ENCODE measurements at regions of chr1 and their contacts with region 1.

Region 1: GRCh38 chr1:204791453-204792353 is 79.0 kb upstream of the NFASC start:
- DNase-seq: peak; percentile 75 to 79
- ATAC-seq: peak; percentile 91 to 97
- H3K4me3 ChIP-seq: no peak overlapping the region
- H3K27ac ChIP-seq: no peak overlapping the region
- H3K4me1 ChIP-seq: no peaks in the 10 kb centered on the region
- CTCF ChIP-seq: peak; percentile 84
- EP300 ChIP-seq: no peak
- POLR2A ChIP-seq: no peak
- RAD21 ChIP-seq: peak; percentile 24 to 33; a peak in 2 of 5 replicates

Region 2: DNA sequence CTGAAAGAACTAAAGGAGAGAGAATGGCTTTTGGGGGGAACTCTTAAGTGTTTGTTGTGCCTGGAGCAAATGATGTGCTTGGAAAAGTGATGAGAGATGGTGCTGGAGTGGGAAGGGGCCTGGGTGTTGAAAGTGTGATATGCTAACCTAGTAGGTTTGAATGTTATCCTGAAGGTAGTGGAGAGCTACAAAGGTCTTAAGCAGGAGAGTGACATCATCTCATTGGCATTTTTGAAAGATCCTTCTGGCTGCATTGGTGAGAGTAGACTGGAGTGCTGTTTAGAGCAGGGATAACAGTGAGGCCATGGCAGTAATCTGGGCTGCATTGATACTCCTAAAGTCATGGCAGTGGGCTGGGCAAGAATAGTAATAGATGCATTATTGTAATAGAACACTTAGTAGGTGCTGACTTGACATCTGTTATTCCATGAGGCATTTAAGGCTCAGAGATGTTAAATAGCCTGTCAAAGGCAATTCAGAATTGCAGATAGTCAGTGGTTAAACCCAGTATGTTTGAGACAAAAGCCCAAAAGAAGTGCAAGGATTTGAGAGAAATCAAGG is 231.0 kb before region 1 on chr1:
- CTCF ChIA-PET with region 1: interaction called, 39 read pairs
- POLR2A ChIA-PET with region 1: no interaction called
- DNase-seq: peak in 1 of 2 experiments; percentile 18
- ATAC-seq: peak in 1 of 2 experiments; percentile 31; a peak in 3 of 6 replicates
- H3K4me3 ChIP-seq: no peak overlapping the region
- H3K27ac ChIP-seq: no peak overlapping the region
- H3K4me1 ChIP-seq: peaks cover 4% of the 10 kb centered on the region; the same call in 2 of the 3 replicates
- CTCF ChIP-seq: no peak
- EP300 ChIP-seq: no peak
- POLR2A ChIP-seq: no peak
- RAD21 ChIP-seq: no peak

Region 3: DNA sequence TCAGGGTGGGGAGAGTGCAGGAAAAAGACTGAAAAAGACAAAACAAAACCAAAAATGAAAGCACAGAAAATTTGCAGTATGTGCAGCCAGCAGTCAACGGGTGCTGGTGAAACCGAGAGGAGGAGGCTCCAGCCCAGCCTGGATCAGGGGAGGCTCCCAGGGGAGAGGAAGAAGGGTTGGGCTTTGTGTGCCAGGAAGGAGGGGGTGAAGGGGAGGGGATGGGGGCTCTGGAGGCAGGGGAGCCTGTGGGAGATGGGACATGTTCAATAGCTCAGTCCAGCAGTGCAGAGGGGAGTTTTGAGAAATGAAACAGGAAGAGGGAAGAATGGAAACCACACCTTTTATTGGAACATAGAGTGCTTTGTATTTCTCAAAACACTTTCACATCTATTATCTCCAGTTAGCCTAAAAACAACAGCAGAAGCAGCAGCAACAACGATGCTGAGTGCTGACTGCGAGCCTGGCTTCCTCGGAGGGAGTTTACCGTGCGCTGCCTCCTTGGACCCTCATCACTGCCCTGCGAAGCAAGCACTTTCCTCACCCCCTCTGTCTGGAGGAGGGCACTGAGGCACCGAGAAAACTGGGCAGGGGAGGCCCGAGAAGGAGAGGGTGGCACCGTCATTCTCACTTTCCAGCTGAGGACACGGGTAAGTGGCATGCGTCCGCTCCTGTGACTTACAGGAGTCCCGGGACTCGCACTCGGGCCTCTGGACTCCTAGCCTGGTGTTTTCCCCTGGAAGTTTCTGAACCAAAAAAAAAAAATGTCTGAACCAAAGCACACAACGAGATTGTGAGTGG is 212.6 kb before region 1 on chr1:
- CTCF ChIA-PET with region 1: interaction called, 11 read pairs
- POLR2A ChIA-PET with region 1: interaction called, 5 read pairs
- DNase-seq: no peak
- ATAC-seq: no peak
- H3K4me3 ChIP-seq: no peak overlapping the region
- H3K27ac ChIP-seq: 0 out of 6 replicates have a peak overlapping the region, but pooled peaks of 1 of the 2 experiments have one; percentile 30
- H3K4me1 ChIP-seq: peaks cover 6% of the 10 kb centered on the region
- CTCF ChIP-seq: no peak
- EP300 ChIP-seq: no peak
- POLR2A ChIP-seq: no peak
- RAD21 ChIP-seq: no peak

Region 4: GRCh38 chr1:204615881-204616280 is 175.8 kb before region 1 on chr1:
- CTCF ChIA-PET with region 1: interaction called, 10 read pairs
- POLR2A ChIA-PET with region 1: no interaction called
- DNase-seq: no peak
- ATAC-seq: no peak
- H3K4me3 ChIP-seq: no peak overlapping the region
- H3K27ac ChIP-seq: no peak overlapping the region
- H3K4me1 ChIP-seq: peaks cover 6% of the 10 kb centered on the region; the same call in 1 of the 3 replicates
- CTCF ChIP-seq: no peak
- EP300 ChIP-seq: no peak
- POLR2A ChIP-seq: no peak
- RAD21 ChIP-seq: no peak

Region 5: GRCh38 chr1:204751894-204752687 is 39.6 kb before region 1 on chr1:
- CTCF ChIA-PET with region 1: interaction called, 10 read pairs
- POLR2A ChIA-PET with region 1: no interaction called
- DNase-seq: peak; percentile 46 to 85
- ATAC-seq: peak; percentile 94 to 100
- H3K4me3 ChIP-seq: peak overlapping the region; percentile 37
- H3K27ac ChIP-seq: peak overlapping the region; percentile 59 to 83
- H3K4me1 ChIP-seq: peaks cover 14% of the 10 kb centered on the region
- CTCF ChIP-seq: peak; percentile 46
- EP300 ChIP-seq: no peak
- POLR2A ChIP-seq: peak; percentile 23; the same call in 1 of the 2 replicates
- RAD21 ChIP-seq: peak; percentile 34 to 57; a peak in 4 of 5 replicates

Region 6: DNA sequence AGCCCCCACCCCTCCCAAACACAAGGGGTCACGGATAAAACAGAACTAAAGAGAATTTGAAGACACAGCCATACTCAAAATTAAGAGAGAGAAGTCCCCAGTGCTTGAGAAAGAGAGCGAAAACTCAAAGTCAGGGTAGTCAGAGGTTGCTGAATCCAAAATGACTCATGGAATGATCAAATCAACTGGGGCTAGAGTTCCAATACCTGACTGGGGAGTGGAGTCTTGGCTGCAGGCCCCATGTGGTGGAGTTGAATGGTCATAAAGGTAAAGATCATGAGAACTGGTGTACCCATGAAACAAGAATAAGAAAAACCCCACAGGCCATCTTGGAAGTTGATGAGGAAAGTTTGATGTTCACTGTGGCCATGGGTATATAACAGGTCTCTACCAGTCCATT is 21.7 kb before region 1 on chr1:
- CTCF ChIA-PET with region 1: interaction called, 19 read pairs
- POLR2A ChIA-PET with region 1: no interaction called
- DNase-seq: no peak
- ATAC-seq: no peak
- H3K4me3 ChIP-seq: no peak overlapping the region
- H3K27ac ChIP-seq: no peak overlapping the region
- H3K4me1 ChIP-seq: no peaks in the 10 kb centered on the region
- CTCF ChIP-seq: no peak
- EP300 ChIP-seq: no peak
- POLR2A ChIP-seq: no peak
- RAD21 ChIP-seq: no peak

Region 7: GRCh38 chr1:204975570-204976235 is 184.0 kb after region 1 on chr1:
- CTCF ChIA-PET with region 1: no interaction called
- POLR2A ChIA-PET with region 1: no interaction called
- DNase-seq: peak; percentile 41 to 91
- ATAC-seq: peak; percentile 78 to 93
- H3K4me3 ChIP-seq: no peak overlapping the region
- H3K27ac ChIP-seq: no peak overlapping the region
- H3K4me1 ChIP-seq: peaks cover 12% of the 10 kb centered on the region
- CTCF ChIP-seq: peak; percentile 60
- EP300 ChIP-seq: no peak
- POLR2A ChIP-seq: no peak
- RAD21 ChIP-seq: peak; percentile 71 to 79

Measured in A549 (cell line).